ENCODE measurements at regions of chr14 and their contacts with region 1.

Region 1: GRCh38 chr14:55373784-55374705 is 37.6 kb downstream of the ATG14 start:
- DNase-seq: peak; percentile 35
- H3K4me3 Mint-ChIP-seq: peak overlapping the region; percentile 64
- H3K27ac Mint-ChIP-seq: peak overlapping the region; percentile 99
- H3K4me1 Mint-ChIP-seq: peaks cover 57% of the 10 kb centered on the region
- H3K27me3 Mint-ChIP-seq: no peaks in the 10 kb centered on the region

Region 2: GRCh38 chr14:55051426-55052268 is 322.4 kb before region 1 on chr14 and contains the start of gene MAPK1IP1L:
- intact Hi-C with region 1: loop called (anchors 5 kb)
- DNase-seq: peak; percentile 90
- H3K4me3 Mint-ChIP-seq: peak within 1 kb of the TSS; percentile 94
- H3K27ac Mint-ChIP-seq: peak within 1 kb of the TSS; percentile 95
- H3K4me1 Mint-ChIP-seq: peaks cover 37% of the 10 kb centered on the region
- H3K27me3 Mint-ChIP-seq: no peaks in the 10 kb centered on the region
- total RNA-seq, gene MAPK1IP1L: 139 and 141 TPM in 2 replicates

Region 3: DNA sequence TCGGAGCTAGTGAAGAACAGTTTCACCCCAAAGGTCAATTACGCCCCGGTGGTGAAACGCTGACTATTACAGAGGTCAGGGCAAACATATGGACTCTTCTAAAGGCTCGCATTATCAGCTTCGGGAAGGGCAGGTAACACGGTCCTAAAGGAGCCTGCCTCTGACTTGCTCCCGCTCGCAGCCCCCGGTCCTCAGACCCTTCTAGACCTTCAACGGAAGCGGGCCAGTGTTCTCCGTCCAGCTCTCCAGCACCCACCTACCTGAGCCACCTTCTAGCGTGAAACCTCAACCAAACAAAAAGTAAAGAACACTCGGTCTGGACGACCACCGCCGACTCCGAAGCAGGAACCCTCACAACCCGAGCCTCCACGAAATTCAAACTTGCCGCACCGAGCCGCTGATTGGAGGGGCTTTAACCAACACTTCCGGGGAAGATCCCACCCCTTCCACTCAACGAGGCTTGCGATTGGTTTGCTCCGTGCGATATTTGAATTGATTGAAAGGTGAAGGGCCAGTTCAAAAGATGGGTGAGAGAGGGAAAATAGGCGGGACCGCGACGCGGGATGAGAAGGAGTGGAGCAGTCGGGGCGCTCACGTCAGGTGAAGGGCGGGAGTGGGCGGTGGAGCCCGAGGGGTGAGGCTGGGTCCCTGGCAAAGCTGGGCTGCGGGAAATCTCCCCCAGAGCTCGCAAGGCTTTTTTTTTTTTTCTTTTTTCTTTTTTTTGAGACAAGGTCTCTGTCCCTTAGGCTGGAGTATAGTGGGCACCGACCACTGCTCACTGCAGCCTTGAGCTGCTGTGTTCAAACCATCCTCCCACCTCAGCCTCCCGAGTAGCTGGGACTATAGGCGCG is 182.6 kb before region 1 on chr14 and contains the start of gene DLGAP5:
- intact Hi-C with region 1: loop called (anchors 2 kb)
- DNase-seq: peak; percentile 91
- H3K4me3 Mint-ChIP-seq: peak within 1 kb of the TSS; percentile 94
- H3K27ac Mint-ChIP-seq: peak within 1 kb of the TSS; percentile 66
- H3K4me1 Mint-ChIP-seq: peaks cover 43% of the 10 kb centered on the region
- H3K27me3 Mint-ChIP-seq: no peaks in the 10 kb centered on the region
- total RNA-seq, gene DLGAP5: 22.4 and 26.4 TPM in 2 replicates

Region 4: GRCh38 chr14:55265197-55265596 is 108.8 kb before region 1 on chr14:
- intact Hi-C with region 1: no loop called
- DNase-seq: no peak
- H3K4me3 Mint-ChIP-seq: no peak overlapping the region
- H3K27ac Mint-ChIP-seq: no peak overlapping the region
- H3K4me1 Mint-ChIP-seq: peaks cover under 1% of the 10 kb centered on the region
- H3K27me3 Mint-ChIP-seq: peaks cover 5% of the 10 kb centered on the region

Region 5: GRCh38 chr14:55339770-55340169 is 34.3 kb before region 1 on chr14:
- intact Hi-C with region 1: loop called (anchors 1 kb)
- DNase-seq: no peak
- H3K4me3 Mint-ChIP-seq: peak overlapping the region; percentile 48
- H3K27ac Mint-ChIP-seq: peak overlapping the region; percentile 16
- H3K4me1 Mint-ChIP-seq: peaks cover 85% of the 10 kb centered on the region
- H3K27me3 Mint-ChIP-seq: no peaks in the 10 kb centered on the region

Region 6: DNA sequence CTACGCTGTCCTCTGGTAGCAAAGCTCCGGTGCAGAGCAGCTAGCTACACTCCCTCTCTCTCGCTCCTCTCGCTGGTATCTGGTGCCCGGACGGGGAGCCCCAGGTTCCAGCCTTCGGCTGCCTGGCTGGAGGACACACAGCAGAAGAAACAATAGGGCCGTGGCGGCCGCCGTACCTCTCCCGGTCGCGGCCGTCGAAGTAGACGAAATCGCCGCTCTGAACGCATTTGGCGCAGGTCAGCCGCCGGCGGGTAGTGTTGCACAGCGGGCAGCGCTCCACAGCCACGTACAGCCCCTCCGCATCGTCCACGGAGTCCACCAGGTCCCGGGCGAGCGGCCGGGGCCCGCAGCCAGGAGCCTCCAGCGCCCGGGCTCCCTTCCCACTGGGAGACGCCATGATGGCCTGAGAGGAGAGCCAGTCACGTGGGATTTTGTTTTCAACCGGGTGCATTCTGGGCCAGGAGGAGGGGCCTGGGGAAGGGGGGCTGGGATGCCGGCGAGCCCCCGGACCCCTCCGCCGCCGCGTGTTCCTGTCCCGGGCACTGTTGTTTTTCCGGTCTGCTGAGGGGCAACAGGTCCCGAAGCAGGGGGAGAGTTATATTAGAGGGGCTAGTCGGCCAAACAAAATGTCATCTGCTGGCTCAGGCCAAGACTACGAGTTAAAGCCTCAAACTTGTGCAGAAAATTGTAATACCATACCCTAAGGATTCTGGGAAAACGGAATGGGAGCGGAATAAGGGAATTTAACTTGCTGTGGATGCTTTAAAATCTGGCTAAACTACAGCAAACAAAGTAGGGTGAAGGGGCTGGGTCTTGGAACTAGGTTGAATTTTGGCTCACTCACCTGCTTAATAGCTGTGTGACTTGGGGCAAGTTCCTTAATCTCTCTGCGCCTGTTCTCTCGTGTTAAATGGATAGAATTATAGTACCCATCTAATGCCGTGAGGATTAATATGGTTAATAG is 37.7 kb after region 1 on chr14 and contains the start of gene ATG14:
- intact Hi-C with region 1: loop called (anchors 1 kb)
- DNase-seq: peak; percentile 70
- H3K4me3 Mint-ChIP-seq: peak within 1 kb of the TSS; percentile 89
- H3K27ac Mint-ChIP-seq: peak within 1 kb of the TSS; percentile 85
- H3K4me1 Mint-ChIP-seq: peaks cover 29% of the 10 kb centered on the region
- H3K27me3 Mint-ChIP-seq: no peaks in the 10 kb centered on the region
- total RNA-seq, gene ATG14: 4.8 and 6.2 TPM in 2 replicates